CD4-positive, alpha-beta T cell (primary cell): ENCODE measurements at regions of chrX and their contacts with region 1.

Region 1: DNA sequence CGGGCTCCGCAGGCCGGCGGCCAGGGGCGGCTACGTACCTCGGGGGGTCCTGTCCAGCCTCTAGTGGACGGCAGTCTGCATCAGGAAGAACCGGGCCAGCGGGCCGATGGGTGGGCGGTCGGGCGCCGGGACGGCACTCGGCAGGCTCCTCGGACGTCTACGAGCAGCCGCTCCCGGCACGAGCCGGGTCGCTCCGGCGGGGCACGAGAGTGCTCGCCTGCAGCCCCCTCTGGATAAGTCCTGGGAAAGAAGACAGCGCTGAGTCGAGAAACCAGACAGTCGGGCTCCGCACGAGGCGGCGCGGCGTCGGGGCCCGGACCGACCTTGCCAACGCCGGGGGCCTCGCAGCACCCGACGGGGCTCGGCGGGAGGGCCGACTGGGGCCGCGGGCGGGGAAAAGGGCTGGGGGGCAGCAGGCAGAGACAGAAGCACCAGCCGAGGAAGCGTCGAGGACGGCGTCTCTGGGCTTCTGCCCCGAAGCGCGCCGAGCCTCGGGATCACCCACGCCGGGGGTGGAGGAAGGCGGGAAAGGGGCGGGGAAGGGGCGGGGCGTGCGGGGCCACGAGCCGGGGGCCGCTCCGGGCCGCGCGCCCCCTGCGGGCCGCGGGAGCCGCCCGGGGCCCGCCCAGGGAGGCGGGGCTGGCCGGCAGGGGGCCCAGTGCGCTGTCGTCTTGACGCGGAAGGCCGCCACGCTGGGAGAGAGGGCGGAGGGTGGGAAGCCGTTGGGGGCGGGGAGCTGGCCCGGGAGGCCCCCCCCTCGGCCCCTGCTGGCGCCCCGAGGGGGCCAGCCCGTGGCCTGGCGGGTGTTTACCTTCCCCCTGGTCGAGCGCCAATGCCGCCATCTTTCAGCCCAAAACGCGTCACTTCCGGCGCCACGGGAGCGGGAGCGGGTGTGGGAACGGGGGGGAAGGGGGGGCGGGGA is 1.9 kb downstream of the KLHL15 start:
- DNase-seq: peak; percentile 63 to 90 (median 76)
- ATAC-seq: peak; percentile 85
- H3K4me3 ChIP-seq: peak overlapping the region; percentile 76
- H3K4me3 Mint-ChIP-seq: peak overlapping the region; percentile 94
- H3K27ac ChIP-seq: peak overlapping the region in 1 of 2 donors; percentile 74
- H3K27ac Mint-ChIP-seq: peak overlapping the region; percentile 94
- H3K4me1 ChIP-seq: peaks cover 7% of the 10 kb centered on the region
- H3K4me1 Mint-ChIP-seq: peaks cover 30% of the 10 kb centered on the region
- H3K27me3 ChIP-seq: no peaks in the 10 kb centered on the region
- H3K27me3 Mint-ChIP-seq: no peaks in the 10 kb centered on the region
- CTCF ChIP-seq: no peak

Region 2: GRCh38 chrX:23952984-23953907 is 71.8 kb before region 1 on chrX:
- CTCF ChIA-PET with region 1: no interaction called
- POLR2A ChIA-PET with region 1: interaction called, 23 read pairs
- intact Hi-C with region 1: loop called in 1 of 2 experiments (anchors 10 kb)
- DNase-seq: peak; percentile 0 to 75 (median 24)
- ATAC-seq: peak; percentile 82
- H3K4me3 ChIP-seq: peak overlapping the region; percentile 55
- H3K4me3 Mint-ChIP-seq: peak overlapping the region; percentile 89
- H3K27ac ChIP-seq: peak overlapping the region; percentile 60 to 64
- H3K27ac Mint-ChIP-seq: peak overlapping the region; percentile 89
- H3K4me1 ChIP-seq: peaks cover 8% of the 10 kb centered on the region
- H3K4me1 Mint-ChIP-seq: peaks cover 11% of the 10 kb centered on the region
- H3K27me3 ChIP-seq: no peaks in the 10 kb centered on the region
- H3K27me3 Mint-ChIP-seq: no peaks in the 10 kb centered on the region
- CTCF ChIP-seq: no peak